Heart right ventricle (tissue), 16 donors: ENCODE measurements at regions of chr10 and their contacts with region 1.

Region 1: DNA sequence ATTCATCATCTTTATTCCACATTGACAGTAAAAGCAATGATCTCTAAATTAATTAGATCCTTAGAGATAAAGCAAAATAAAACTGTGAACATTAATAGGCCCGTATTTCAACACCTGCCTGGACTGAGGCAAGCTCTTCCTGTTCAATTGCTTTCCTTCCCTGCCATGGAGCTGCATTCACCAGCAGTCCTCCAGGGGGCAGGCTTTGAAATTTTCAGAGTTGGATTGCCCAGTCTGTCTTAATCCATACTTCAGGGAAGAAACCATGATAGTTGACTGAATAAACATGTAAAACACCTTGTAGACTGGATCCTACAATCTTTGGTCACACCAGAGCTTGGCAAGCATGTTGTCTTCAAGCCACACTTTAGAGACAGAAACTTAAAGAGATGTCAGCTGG is 936.6 kb downstream of the NRG3 start:
- DNase-seq: no peak
- ATAC-seq: no peak
- H3K4me3 ChIP-seq: no peak overlapping the region
- H3K27ac ChIP-seq: no peak overlapping the region
- H3K4me1 ChIP-seq: no peaks in the 10 kb centered on the region
- H3K27me3 ChIP-seq: no peaks in the 10 kb centered on the region
- CTCF ChIP-seq: peak in 7 of 9 donors; percentile 23 to 54 (median 34)

Region 2: GRCh38 chr10:82847242-82847641 is 35.6 kb after region 1 on chr10:
- intact Hi-C with region 1: no loop called
- DNase-seq: no peak
- ATAC-seq: no peak
- H3K4me3 ChIP-seq: no peak overlapping the region
- H3K27ac ChIP-seq: no peak overlapping the region
- H3K4me1 ChIP-seq: no peaks in the 10 kb centered on the region
- H3K27me3 ChIP-seq: no peaks in the 10 kb centered on the region
- CTCF ChIP-seq: no peak

Region 3: GRCh38 chr10:82953909-82954308 is 142.3 kb after region 1 on chr10:
- intact Hi-C with region 1: loop called in 1 of 10 experiments (anchors 10 kb)
- DNase-seq: no peak
- ATAC-seq: no peak
- H3K4me3 ChIP-seq: no peak overlapping the region
- H3K27ac ChIP-seq: no peak overlapping the region
- H3K4me1 ChIP-seq: no peaks in the 10 kb centered on the region
- H3K27me3 ChIP-seq: peaks cover 0 to 3% (median 0%) of the 10 kb centered on the region in 7 donors
- CTCF ChIP-seq: no peak

Region 4: DNA sequence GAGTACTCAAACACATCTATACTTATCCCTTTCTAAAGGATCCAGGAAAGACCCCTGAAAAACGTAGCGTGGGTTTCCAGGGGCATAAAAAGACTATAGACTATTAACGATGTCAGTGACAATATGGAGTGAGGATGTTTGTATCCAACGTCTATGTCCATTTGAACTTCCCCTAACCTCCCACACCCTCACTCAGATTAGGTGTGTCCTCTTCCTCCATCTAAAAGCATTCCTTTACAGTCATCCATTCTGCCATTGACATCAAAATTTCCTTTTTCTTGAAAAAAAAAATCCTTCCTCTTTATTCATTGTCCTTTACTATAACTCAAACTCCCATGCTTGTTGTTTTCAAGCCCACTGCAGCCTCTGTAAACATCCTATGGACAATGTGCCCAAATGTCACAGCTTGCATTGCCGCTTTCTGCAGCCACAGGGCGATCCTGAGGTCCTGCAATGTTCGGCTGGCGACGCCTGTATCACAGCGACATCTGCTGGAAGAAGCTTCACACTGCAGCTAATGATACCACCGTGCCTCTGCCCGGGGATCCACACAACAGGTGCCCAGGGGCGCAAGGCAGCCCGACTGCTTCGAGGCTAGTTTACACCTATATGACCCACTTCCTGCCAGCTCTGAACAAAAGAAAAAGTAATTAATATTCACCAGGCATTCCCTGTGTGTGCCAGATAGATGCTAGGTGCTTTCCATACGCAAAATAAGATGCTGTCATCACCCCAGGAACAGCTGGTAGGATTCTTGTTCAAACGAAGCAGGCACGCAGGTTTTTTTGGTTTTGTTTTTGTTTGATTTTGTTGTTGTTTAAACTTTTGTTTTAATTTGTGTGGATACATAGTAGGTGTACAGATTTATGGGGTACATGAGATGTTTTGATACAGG is 1059.8 kb after region 1 on chr10:
- intact Hi-C with region 1: loop called in 1 of 10 experiments (anchors 5 kb)
- DNase-seq: peak; percentile 55 to 62
- ATAC-seq: peak; percentile 80 to 93 (median 88)
- H3K4me3 ChIP-seq: no peak overlapping the region
- H3K27ac ChIP-seq: no peak overlapping the region
- H3K4me1 ChIP-seq: peaks cover 0 to 13% (median 6%) of the 10 kb centered on the region in 9 donors
- H3K27me3 ChIP-seq: no peaks in the 10 kb centered on the region
- CTCF ChIP-seq: peak; percentile 89 to 99 (median 97)

Region 5: GRCh38 chr10:83881661-83882060 is 1070.0 kb after region 1 on chr10:
- intact Hi-C with region 1: loop called in 1 of 10 experiments (anchors 10 kb)
- DNase-seq: peak in 1 of 2 donors; percentile 26
- ATAC-seq: peak in 6 of 8 donors; percentile 45 to 84 (median 70)
- H3K4me3 ChIP-seq: no peak overlapping the region
- H3K27ac ChIP-seq: peak overlapping the region in 5 of 10 donors; percentile 16 to 52 (median 43)
- H3K4me1 ChIP-seq: peaks cover 0 to 25% (median 4%) of the 10 kb centered on the region in 9 donors
- H3K27me3 ChIP-seq: no peaks in the 10 kb centered on the region
- CTCF ChIP-seq: no peak